Activated T-helper 1 cell treated with anti-CD3 and anti-CD28 coated beads, Interleukin-12 subunit alpha, Interleukin-12 subunit beta, Interleukin-2, Interleukin-4 antibody, amounts not matched to agents 30 ng/mL and 10 ng/mL and 1 ng/mL, durations not matched to agents 14 hours and 24 hours and 36 hours (primary cell): ENCODE measurements at regions of chrX and their contacts with region 1.

Region 1: DNA sequence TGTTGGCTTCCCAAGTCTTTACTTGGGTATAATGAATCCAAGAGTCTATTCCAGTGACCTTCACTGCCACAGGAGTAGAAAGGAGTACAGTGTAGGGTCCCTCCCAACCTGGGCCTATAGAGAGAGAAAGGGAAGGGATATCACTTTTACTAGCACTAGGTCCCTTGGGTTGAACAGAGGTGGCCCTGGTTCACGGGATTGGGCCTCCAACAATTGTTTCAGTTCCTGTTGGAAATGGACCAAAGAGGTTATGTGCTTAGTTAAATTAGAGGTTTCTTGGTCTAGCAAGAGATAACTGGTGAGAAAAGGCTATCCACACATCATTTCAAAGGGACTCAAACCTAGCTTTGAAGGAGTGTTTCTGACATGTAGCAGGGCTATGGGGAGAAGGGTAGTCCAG is 57.1 kb upstream of the MED14 start:
- DNase-seq: no peak
- H3K4me3 Mint-ChIP-seq: no peak overlapping the region
- H3K27ac Mint-ChIP-seq: no peak overlapping the region
- H3K4me1 Mint-ChIP-seq: no peaks in the 10 kb centered on the region
- H3K27me3 Mint-ChIP-seq: no peaks in the 10 kb centered on the region

Region 2: GRCh38 chrX:40543661-40544328 is 248.6 kb before region 1 on chrX:
- intact Hi-C with region 1: loop called (anchors 2 kb)
- DNase-seq: no peak
- H3K4me3 Mint-ChIP-seq: no peak overlapping the region
- H3K27ac Mint-ChIP-seq: no peak overlapping the region
- H3K4me1 Mint-ChIP-seq: peaks cover 21% of the 10 kb centered on the region
- H3K27me3 Mint-ChIP-seq: peaks cover 6% of the 10 kb centered on the region

Region 3: GRCh38 chrX:40735325-40736169 is 56.9 kb before region 1 on chrX and contains the start of gene MED14:
- intact Hi-C with region 1: loop called (anchors 1 kb)
- DNase-seq: peak; percentile 82
- H3K4me3 Mint-ChIP-seq: peak within 1 kb of the TSS; percentile 87
- H3K27ac Mint-ChIP-seq: peak within 1 kb of the TSS; percentile 90
- H3K4me1 Mint-ChIP-seq: peaks cover 30% of the 10 kb centered on the region
- H3K27me3 Mint-ChIP-seq: no peaks in the 10 kb centered on the region
- total RNA-seq, gene MED14: 36.4 and 40.9 TPM in 2 replicates

Region 4: GRCh38 chrX:42149765-42150164 is 1357.3 kb after region 1 on chrX:
- intact Hi-C with region 1: no loop called
- DNase-seq: no peak
- H3K4me3 Mint-ChIP-seq: no peak overlapping the region
- H3K27ac Mint-ChIP-seq: no peak overlapping the region
- H3K4me1 Mint-ChIP-seq: peaks cover 6% of the 10 kb centered on the region
- H3K27me3 Mint-ChIP-seq: no peaks in the 10 kb centered on the region